Activated CD4-positive, alpha-beta memory T cell treated with anti-CD3 and anti-CD28 coated beads for 36 hours (primary cell): ENCODE measurements at regions of chr6 and their contacts with region 1.

Region 1: DNA sequence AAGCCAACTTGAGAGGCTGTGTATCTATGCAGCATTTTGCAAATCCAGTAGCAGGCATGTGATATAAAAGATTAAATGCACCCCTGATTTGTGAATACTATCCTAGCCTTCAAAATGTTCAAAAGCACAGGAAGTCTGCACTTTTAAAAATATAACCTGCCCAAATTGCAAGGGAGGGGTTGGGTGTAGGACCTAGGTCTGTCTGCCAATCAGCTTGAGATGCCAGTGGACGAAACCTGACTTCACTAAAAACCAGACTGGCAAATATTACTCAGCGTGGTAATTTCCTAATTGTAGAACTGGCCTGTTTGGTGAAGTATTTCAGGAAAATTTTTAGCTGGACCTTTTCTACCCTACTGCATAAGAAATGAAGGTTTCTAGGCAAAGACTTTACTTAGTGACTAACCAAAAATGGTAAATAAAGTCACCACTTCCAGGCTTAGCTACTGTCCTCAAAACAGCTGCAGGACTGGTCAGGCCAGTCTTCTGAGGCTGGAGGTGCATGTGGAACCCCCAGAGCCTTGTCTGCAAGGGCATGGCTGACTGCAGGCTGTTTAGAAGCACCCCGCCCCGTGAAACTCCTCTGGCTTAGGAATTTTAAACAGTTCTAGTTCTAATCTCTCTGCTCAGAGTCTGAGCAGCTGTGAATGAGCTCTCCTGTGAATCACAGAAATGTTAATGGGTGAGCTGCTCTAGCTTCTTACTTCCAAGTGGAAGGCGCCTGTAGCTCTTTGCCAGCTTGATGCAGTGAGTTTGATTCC is 104.5 kb upstream of the ESR1 start:
- DNase-seq: no peak
- H3K4me3 Mint-ChIP-seq: no peak overlapping the region
- H3K27ac Mint-ChIP-seq: peak overlapping the region; percentile 56
- H3K4me1 Mint-ChIP-seq: peaks cover 44% of the 10 kb centered on the region
- H3K27me3 Mint-ChIP-seq: peaks cover 6% of the 10 kb centered on the region

Region 2: DNA sequence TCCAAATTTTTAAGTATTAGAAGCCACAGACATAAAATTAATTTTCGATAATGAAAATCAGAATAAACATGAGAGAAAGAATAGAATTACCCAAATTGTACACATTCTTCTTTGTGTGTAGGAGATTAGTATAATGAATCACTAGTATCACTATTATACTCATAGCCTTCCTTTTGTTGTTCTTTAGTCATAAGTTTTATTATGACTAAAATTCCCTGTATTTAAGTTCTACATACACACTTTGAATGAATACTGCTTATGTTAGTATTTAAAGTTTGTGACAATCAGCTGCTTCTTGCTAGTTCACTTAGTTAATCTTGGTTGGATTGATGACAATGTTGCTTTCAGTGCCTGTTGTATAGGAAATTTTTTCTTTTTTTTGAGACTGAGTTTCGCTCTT is 136.5 kb before region 1 on chr6:
- CTCF ChIA-PET with region 1: no interaction called
- POLR2A ChIA-PET with region 1: no interaction called
- intact Hi-C with region 1: loop called (anchors 1 kb)
- DNase-seq: no peak
- H3K4me3 Mint-ChIP-seq: no peak overlapping the region
- H3K27ac Mint-ChIP-seq: no peak overlapping the region
- H3K4me1 Mint-ChIP-seq: peaks cover 5% of the 10 kb centered on the region
- H3K27me3 Mint-ChIP-seq: peaks cover 19% of the 10 kb centered on the region

Region 3: GRCh38 chr6:151627705-151628455 is 75.2 kb before region 1 on chr6:
- CTCF ChIA-PET with region 1: no interaction called
- POLR2A ChIA-PET with region 1: no interaction called
- intact Hi-C with region 1: loop called (anchors 1 kb)
- DNase-seq: no peak
- H3K4me3 Mint-ChIP-seq: no peak overlapping the region
- H3K27ac Mint-ChIP-seq: no peak overlapping the region
- H3K4me1 Mint-ChIP-seq: peaks cover 17% of the 10 kb centered on the region
- H3K27me3 Mint-ChIP-seq: peaks cover 14% of the 10 kb centered on the region

Region 4: DNA sequence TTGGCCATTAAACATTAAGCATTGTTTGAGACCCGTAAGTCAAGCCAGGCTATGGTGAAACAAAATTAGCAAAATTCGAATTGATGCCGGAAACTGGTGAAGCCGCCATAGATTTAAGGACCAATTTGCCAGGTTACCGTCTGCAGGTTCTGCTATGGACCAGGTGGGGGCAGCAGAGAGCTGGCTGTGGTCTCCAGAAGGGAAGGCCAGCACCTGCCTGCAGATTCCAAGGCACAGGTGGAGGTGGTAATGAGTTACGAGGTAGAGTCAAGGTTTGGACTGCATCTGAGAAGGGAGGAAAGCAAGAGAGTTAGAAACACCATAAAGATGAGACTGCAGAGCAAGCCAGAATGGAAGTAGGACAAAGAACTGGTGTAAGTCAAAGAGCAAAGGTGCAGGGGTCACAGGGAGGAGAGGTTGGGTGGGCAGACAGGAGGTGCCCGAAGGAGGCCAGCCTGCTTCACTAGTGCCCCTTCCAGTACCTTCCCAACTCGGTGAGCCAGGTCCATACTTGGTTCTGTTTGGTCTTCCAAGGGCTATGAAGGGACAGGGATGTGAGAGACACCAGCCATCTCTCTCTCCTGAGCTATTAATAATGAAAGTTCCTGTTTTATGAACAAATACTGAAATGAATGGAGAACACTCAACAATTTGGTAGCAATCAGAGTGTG is 27.1 kb before region 1 on chr6:
- CTCF ChIA-PET with region 1: no interaction called
- POLR2A ChIA-PET with region 1: no interaction called
- intact Hi-C with region 1: no loop called
- DNase-seq: peak; percentile 65
- H3K4me3 Mint-ChIP-seq: no peak overlapping the region
- H3K27ac Mint-ChIP-seq: no peak overlapping the region
- H3K4me1 Mint-ChIP-seq: peaks cover 10% of the 10 kb centered on the region
- H3K27me3 Mint-ChIP-seq: peaks cover 4% of the 10 kb centered on the region

Region 5: DNA sequence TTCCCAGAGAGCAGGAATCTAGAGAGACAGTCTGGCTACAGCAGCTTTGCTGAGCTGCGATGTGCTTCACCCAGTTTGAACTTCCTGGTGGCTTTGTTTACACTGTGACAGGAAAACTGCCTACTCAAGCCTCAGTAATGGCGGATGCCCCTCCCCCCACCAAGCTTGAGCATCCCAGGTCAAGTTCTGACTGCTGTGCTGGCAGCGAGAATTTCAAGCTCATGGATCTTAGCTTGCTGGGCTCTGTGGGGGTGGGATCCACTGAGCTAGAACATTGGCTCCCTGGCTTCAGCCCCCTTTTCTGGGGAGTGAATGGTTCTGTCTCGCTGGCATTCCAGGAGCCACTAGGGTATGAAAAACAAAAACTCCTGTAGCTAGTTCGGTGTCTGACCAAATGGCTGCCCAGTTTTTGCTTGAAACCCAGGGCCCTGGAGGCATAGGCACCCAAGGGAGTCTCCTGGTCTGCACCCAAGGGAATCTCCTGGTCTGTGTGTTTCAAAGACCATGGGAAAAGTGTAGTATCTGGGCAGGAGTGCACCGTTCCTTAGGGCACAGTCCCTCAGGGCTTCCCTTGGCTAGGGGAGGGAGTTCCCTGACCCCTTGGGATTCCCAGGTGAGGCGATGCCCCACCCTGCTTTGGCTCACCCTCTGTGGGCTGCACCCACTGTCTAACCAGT is 13.6 kb after region 1 on chr6:
- CTCF ChIA-PET with region 1: interaction called, 4 read pairs
- POLR2A ChIA-PET with region 1: interaction called, 4 read pairs
- intact Hi-C with region 1: loop called (anchors 1 kb)
- DNase-seq: peak; percentile 50
- H3K4me3 Mint-ChIP-seq: no peak overlapping the region
- H3K27ac Mint-ChIP-seq: no peak overlapping the region
- H3K4me1 Mint-ChIP-seq: peaks cover 22% of the 10 kb centered on the region
- H3K27me3 Mint-ChIP-seq: peaks cover 2% of the 10 kb centered on the region

Region 6: DNA sequence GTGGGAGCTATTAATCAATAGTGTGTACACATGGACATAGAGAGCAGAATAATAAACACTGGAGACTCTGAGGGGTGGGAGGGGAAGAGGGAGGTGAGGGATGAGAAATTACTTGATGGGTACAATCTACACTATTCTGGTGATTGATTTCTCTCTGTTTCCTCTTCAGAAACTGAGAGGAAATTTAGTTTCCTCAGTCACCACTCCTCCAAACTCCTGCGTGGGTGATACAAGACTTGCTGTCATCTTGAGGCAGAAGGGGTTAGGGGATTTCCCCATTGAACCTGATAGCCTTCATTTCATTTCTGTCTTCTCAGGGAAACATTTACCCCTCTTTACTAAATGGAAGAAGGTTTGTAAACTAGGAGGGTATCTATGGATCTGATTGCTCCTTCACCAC is 20.1 kb after region 1 on chr6:
- CTCF ChIA-PET with region 1: interaction called, 4 read pairs
- POLR2A ChIA-PET with region 1: interaction called, 4 read pairs
- intact Hi-C with region 1: loop called (anchors 1 kb)
- DNase-seq: peak; percentile 69
- H3K4me3 Mint-ChIP-seq: no peak overlapping the region
- H3K27ac Mint-ChIP-seq: peak overlapping the region; percentile 9
- H3K4me1 Mint-ChIP-seq: peaks cover 23% of the 10 kb centered on the region
- H3K27me3 Mint-ChIP-seq: peaks cover 3% of the 10 kb centered on the region

Region 7: GRCh38 chr6:151757506-151758245 is 54.6 kb after region 1 on chr6:
- CTCF ChIA-PET with region 1: interaction called, 3 read pairs
- POLR2A ChIA-PET with region 1: no interaction called
- intact Hi-C with region 1: loop called (anchors 1 kb)
- DNase-seq: peak; percentile 55
- H3K4me3 Mint-ChIP-seq: peak overlapping the region; percentile 42
- H3K27ac Mint-ChIP-seq: peak overlapping the region; percentile 61
- H3K4me1 Mint-ChIP-seq: peaks cover 23% of the 10 kb centered on the region
- H3K27me3 Mint-ChIP-seq: no peaks in the 10 kb centered on the region

Region 8: DNA sequence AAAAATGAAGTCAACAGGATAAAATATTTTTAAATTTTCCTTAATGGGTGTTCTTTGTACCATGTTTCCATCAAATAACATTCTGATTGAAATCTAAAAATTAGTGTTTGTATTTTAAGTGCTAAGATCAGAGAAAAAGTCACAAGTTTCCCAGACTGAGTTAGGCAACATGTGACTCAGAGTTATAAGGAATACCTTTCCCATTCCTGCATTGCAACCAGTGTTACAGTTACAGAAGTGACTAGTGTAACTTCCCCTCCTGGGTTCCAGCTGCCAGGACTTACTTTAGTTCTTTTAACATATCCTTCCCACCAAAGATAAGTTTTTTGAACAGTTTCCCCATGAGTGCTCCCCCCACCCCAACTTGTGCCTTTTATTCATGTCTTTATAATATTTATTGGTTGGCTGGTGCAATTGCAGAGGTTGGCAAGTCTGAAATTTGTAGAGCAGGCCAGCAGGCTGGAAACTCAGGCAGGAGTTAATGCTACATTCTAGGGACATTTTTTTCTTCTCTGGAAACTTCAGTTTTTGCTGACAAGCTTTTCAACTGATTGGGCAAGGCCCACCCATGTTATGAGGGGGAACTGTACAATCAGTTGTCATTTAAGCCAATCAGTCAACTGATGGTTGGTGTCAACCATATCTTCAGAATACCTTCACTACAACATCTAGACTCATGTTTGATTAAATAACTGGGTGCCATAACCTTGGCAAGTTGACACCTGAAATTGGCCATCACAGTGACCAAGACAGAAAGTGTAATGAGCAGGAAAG is 81.6 kb after region 1 on chr6:
- CTCF ChIA-PET with region 1: no interaction called
- POLR2A ChIA-PET with region 1: no interaction called
- intact Hi-C with region 1: no loop called
- DNase-seq: no peak
- H3K4me3 Mint-ChIP-seq: no peak overlapping the region
- H3K27ac Mint-ChIP-seq: no peak overlapping the region
- H3K4me1 Mint-ChIP-seq: no peaks in the 10 kb centered on the region
- H3K27me3 Mint-ChIP-seq: no peaks in the 10 kb centered on the region